Gastrocnemius medialis (tissue), 4 donors: ENCODE measurements at regions of chr10 and their contacts with region 1.

Region 1: DNA sequence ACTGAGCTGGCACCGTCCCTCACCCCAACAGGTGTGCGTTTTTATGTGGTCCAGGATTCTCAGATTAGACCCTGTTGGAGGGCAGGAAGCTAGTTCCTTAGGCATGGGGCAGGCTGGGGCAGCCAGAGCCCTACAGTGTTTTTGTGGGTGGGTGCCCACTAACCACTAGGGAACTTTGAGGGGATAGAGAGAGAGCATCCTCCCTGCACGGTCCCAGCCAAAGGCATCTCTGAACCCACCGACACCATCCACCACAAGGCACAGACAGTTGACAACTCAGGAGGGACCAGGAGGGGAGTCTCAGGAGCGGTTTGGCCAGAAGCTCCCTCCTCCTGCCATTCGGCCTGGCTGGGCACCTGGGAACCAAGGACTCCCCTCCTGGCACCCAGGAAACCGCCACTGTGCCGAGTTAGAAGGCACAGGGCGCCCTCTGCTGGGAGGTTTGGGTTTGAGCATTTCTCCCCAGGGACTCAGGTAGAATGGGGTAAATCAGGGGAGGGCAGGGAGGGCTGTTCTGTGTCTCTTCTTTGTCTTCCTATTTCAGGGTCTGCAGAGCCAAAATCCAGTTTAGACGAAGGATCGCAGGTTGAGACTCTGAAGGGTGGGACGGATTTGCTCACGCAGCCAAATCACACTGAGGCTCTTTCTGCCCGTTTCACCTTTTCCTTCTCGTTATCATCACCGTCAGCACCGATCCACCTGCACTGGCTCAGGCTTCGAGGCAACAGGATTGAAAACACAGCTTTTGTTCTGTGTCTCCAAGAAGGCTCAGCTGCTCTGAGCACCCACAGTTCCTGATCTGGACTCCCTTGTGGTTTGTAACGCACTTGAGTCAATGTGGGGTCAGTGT is 84.8 kb upstream of the COL13A1 start:
- DNase-seq: peak in 1 of 2 donors; percentile 37
- ATAC-seq: peak in 1 of 2 donors; percentile 44
- H3K4me3 ChIP-seq: no peak overlapping the region
- H3K27ac ChIP-seq: no peak overlapping the region
- H3K4me1 ChIP-seq: peaks cover 7 to 12% of the 10 kb centered on the region in 2 donors
- H3K27me3 ChIP-seq: no peaks in the 10 kb centered on the region
- CTCF ChIP-seq: peak; percentile 22 to 71 (median 64)
- POLR2A ChIP-seq: no peak

Region 2: GRCh38 chr10:69624245-69624786 is 92.6 kb before region 1 on chr10:
- in situ Hi-C with region 1: no loop called
- intact Hi-C with region 1: no loop called
- DNase-seq: no peak
- ATAC-seq: no peak
- H3K4me3 ChIP-seq: no peak overlapping the region
- H3K27ac ChIP-seq: no peak overlapping the region
- H3K4me1 ChIP-seq: no peaks in the 10 kb centered on the region
- H3K27me3 ChIP-seq: peaks cover 0 to 4% (median 2%) of the 10 kb centered on the region in 3 donors
- CTCF ChIP-seq: no peak
- POLR2A ChIP-seq: no peak

Region 3: DNA sequence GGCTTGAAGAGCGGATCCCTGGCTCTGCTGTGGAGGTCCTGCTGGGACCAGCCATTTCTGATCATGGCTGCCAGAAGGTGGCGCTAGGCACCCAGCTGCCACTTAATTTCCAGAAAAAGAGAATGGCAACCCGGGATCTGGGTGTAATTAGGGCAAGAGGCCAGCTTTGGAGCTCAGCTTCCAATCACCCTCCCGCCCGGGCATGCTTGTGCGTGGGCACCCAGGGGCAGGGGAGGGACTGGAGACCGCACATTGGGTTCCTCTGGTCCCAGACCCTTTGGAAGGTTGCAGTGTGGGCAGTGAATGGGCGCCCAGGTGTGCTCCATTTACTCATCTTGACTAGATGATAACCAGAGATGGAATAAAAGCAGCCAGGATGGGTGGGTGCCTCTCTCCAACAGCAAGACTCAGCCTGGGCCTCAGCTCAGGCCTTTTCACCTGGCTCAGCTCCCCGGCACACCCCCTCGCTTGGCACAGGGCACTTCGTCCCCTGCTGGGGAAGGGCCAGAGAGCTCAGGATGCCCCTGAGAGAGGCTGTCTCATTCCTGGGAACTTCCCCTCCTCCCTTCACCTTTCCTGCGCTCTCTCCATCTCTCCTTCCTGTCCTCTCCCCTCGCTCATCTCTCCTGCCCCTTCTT is 72.2 kb before region 1 on chr10:
- in situ Hi-C with region 1: no loop called
- intact Hi-C with region 1: loop called (anchors 1 kb)
- DNase-seq: peak in 1 of 2 donors; percentile 22
- ATAC-seq: peak in 1 of 2 donors; percentile 60
- H3K4me3 ChIP-seq: no peak overlapping the region
- H3K27ac ChIP-seq: no peak overlapping the region
- H3K4me1 ChIP-seq: no peaks in the 10 kb centered on the region
- H3K27me3 ChIP-seq: no peaks in the 10 kb centered on the region
- CTCF ChIP-seq: peak; percentile 58 to 82 (median 65)
- POLR2A ChIP-seq: no peak

Region 4: GRCh38 chr10:69696073-69696731 is 20.7 kb before region 1 on chr10:
- in situ Hi-C with region 1: no loop called
- intact Hi-C with region 1: loop called (anchors 2 kb)
- DNase-seq: no peak
- ATAC-seq: no peak
- H3K4me3 ChIP-seq: no peak overlapping the region
- H3K27ac ChIP-seq: no peak overlapping the region
- H3K4me1 ChIP-seq: no peaks in the 10 kb centered on the region
- H3K27me3 ChIP-seq: no peaks in the 10 kb centered on the region
- CTCF ChIP-seq: peak in 3 of 5 experiments; percentile 37 to 50 (median 48)
- POLR2A ChIP-seq: no peak

Region 5: GRCh38 chr10:69800109-69800508 is 83.2 kb after region 1 on chr10:
- in situ Hi-C with region 1: no loop called
- intact Hi-C with region 1: loop called (anchors 1 kb)
- DNase-seq: no peak
- ATAC-seq: peak; percentile 17 to 28
- H3K4me3 ChIP-seq: no peak overlapping the region
- H3K27ac ChIP-seq: no peak overlapping the region
- H3K4me1 ChIP-seq: peaks cover 10 to 12% of the 10 kb centered on the region in 2 donors
- H3K27me3 ChIP-seq: no peaks in the 10 kb centered on the region
- CTCF ChIP-seq: peak; percentile 21 to 69 (median 43)
- POLR2A ChIP-seq: no peak

Region 6: DNA sequence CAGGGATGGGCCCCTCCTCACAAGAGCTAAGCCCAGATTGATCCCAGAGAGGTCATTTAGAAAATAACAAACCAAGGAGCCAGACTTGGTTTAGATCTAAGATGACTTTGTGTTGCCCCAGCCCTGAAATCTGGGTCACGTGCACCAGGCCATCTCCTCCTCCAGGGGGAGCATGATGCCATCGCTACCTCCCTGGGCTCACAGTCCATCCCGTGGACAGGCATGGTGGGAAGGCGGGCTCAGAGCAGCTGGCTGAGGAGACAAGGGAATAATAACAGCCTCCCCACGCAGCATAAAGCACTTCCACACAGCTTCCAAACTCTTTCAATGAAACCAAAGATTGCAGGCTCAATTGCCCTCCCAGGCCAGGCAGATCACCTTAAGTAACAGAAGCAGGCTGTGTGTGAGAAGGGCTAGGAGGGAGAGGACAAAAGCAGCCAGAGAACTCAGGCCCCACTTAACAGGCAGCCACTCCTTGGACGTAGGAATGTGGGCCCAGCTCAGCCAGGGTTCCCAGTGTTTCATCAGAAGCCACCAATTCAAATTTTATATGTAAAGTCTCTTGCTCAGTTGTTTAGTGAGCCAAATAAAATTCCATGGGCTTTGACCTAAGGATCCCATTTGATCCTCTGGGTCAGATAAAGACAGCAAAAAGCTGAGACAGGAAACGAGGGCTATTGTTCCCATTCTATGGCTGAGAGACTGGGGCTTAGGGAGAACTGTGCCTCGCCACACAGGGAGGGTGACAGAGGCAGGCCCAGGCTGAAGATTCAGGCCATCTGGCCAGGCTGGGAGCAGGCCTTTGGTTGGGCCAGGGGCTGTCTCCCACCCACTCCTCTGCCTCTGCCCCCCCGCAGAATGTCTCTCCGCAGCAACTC is 184.9 kb after region 1 on chr10:
- in situ Hi-C with region 1: no loop called
- intact Hi-C with region 1: loop called (anchors 5 kb)
- DNase-seq: peak; percentile 46 to 66
- ATAC-seq: peak; percentile 31 to 36
- H3K4me3 ChIP-seq: no peak overlapping the region
- H3K27ac ChIP-seq: peak overlapping the region; percentile 78 to 88 (median 84)
- H3K4me1 ChIP-seq: peaks cover 29% of the 10 kb centered on the region in 2 donors
- H3K27me3 ChIP-seq: no peaks in the 10 kb centered on the region
- CTCF ChIP-seq: peak; percentile 19 to 70 (median 44)
- POLR2A ChIP-seq: no peak